GM12878 (cell line): ENCODE measurements at regions of chr20 and their contacts with region 1.

Region 1: DNA sequence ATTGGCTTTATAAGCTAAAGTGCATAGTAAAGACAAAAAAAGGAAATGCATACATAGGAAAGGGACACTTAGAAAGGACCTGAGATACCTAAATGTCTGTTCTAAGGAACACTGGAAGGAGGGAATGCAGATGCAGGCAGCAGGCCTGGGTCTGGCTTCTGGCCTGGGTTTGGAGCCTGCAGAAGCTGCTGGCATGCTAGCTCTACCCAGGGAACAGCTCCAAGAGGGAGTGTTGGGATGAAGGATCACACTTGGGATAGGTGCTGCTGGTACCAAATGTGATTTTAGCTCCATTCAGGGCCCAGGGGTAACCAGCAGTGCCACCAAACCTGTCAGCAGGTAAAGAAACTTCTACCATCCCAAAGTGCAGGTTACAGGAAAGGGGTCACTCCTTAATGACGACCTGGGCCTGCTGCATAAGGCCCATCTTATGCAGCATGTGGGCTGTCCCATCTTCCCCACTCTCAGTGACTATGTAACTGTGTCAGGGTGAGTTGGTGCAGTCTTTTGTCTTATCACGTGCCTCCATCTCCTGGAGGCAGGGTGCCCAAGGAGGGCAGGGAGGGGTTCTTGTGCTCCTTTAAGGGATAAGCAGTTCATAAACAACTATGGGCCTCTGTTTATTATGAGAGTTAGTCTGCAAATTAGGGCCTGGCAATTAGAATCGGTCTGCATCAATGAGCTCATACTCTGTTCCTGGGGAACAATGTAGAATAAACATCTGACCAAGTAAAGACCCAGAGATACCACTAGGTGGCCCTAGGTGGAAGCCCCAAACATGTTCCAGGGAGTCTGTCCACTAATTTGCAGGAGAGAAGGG is 26.9 kb downstream of the DDX27 start:
- DNase-seq: no peak
- ATAC-seq: peak; percentile 89
- H3K4me3 ChIP-seq: no peak overlapping the region
- H3K27ac ChIP-seq: no peak overlapping the region
- H3K4me1 ChIP-seq: no peaks in the 10 kb centered on the region
- H3K27me3 ChIP-seq: no peaks in the 10 kb centered on the region
- CTCF ChIP-seq: peak; percentile 65 to 76 (median 76)
- EP300 ChIP-seq: no peak
- POLR2A ChIP-seq: no peak
- RAD21 ChIP-seq: peak; percentile 70

Region 2: DNA sequence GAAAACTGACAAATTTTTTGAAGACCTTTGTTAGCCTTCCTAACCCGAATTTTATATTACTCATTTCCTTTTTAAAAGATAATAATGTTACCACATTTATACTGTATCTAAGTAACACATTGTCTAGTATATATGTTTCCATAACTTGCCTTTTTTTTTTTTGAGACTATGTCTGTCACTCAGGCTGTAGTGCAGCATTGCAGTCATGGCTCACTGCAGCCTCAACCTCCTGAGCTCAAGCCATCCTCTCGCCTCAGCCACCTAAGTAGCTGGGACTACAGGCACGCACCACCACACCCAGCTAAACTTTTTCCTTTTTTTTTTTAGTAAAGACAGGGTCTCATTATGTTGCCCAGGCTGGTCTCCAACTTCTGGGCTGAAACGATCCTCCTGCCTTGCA is 13.2 kb after region 1 on chr20:
- CTCF ChIA-PET with region 1: interaction called, 17 read pairs
- POLR2A ChIA-PET with region 1: interaction called, 4 read pairs
- RAD21 ChIA-PET with region 1: no interaction called
- SMC1A ChIA-PET with region 1: interaction called, 4 read pairs
- in situ Hi-C with region 1: no loop called
- intact Hi-C with region 1: no loop called
- DNase-seq: no peak
- ATAC-seq: no peak
- H3K4me3 ChIP-seq: no peak overlapping the region
- H3K27ac ChIP-seq: no peak overlapping the region
- H3K4me1 ChIP-seq: no peaks in the 10 kb centered on the region
- H3K27me3 ChIP-seq: no peaks in the 10 kb centered on the region
- CTCF ChIP-seq: no peak
- EP300 ChIP-seq: no peak
- POLR2A ChIP-seq: no peak
- RAD21 ChIP-seq: no peak

Region 3: GRCh38 chr20:49268600-49269365 is 22.7 kb after region 1 on chr20:
- CTCF ChIA-PET with region 1: interaction called, 12 read pairs
- POLR2A ChIA-PET with region 1: interaction called, 3 read pairs
- RAD21 ChIA-PET with region 1: interaction called, 3 read pairs
- SMC1A ChIA-PET with region 1: interaction called, 3 read pairs
- in situ Hi-C with region 1: no loop called
- intact Hi-C with region 1: no loop called
- DNase-seq: no peak
- ATAC-seq: peak; percentile 61
- H3K4me3 ChIP-seq: peak overlapping the region; percentile 54
- H3K27ac ChIP-seq: no peak overlapping the region
- H3K4me1 ChIP-seq: peaks cover 26% of the 10 kb centered on the region
- H3K27me3 ChIP-seq: no peaks in the 10 kb centered on the region
- CTCF ChIP-seq: no peak
- EP300 ChIP-seq: no peak
- POLR2A ChIP-seq: no peak
- RAD21 ChIP-seq: no peak

Region 4: GRCh38 chr20:49278036-49278817 is 32.1 kb after region 1 on chr20 and contains the start of gene ZNFX1:
- CTCF ChIA-PET with region 1: interaction called, 6 read pairs
- POLR2A ChIA-PET with region 1: interaction called, 5 read pairs
- RAD21 ChIA-PET with region 1: interaction called, 17 read pairs
- SMC1A ChIA-PET with region 1: interaction called, 17 read pairs
- in situ Hi-C with region 1: no loop called
- intact Hi-C with region 1: no loop called
- DNase-seq: peak; percentile 95
- ATAC-seq: peak; percentile 85
- H3K4me3 ChIP-seq: peak within 1 kb of the TSS; percentile 95
- H3K27ac ChIP-seq: peak within 1 kb of the TSS; percentile 92
- H3K4me1 ChIP-seq: peaks cover 3% of the 10 kb centered on the region; the same call in 1 of the 2 replicates
- H3K27me3 ChIP-seq: no peaks in the 10 kb centered on the region
- CTCF ChIP-seq: peak in 2 of 3 experiments; percentile 3 to 24; a peak in 2 of 6 replicates
- EP300 ChIP-seq: 0 out of 4 replicates have a peak, but pooled peaks of 1 of the 2 experiments have one; percentile 9
- POLR2A ChIP-seq: peak; percentile 99
- RAD21 ChIP-seq: no peak
- polyA plus RNA-seq, gene ZNFX1: 7.4 to 14.6 TPM

Region 5: GRCh38 chr20:49323622-49324238 is 77.6 kb after region 1 on chr20:
- CTCF ChIA-PET with region 1: interaction called, 46 read pairs
- POLR2A ChIA-PET with region 1: interaction called, 4 read pairs
- RAD21 ChIA-PET with region 1: interaction called, 8 read pairs
- SMC1A ChIA-PET with region 1: interaction called, 5 read pairs
- in situ Hi-C with region 1: no loop called
- intact Hi-C with region 1: loop called (anchors 2 kb)
- DNase-seq: no peak
- ATAC-seq: peak; percentile 79
- H3K4me3 ChIP-seq: no peak overlapping the region
- H3K27ac ChIP-seq: no peak overlapping the region
- H3K4me1 ChIP-seq: no peaks in the 10 kb centered on the region
- H3K27me3 ChIP-seq: peaks cover 12 to 13% of the 10 kb centered on the region in 2 experiments
- CTCF ChIP-seq: peak; percentile 38 to 60 (median 44); a peak in 4 of 6 replicates
- EP300 ChIP-seq: no peak
- POLR2A ChIP-seq: no peak
- RAD21 ChIP-seq: peak; percentile 71

Region 6: DNA sequence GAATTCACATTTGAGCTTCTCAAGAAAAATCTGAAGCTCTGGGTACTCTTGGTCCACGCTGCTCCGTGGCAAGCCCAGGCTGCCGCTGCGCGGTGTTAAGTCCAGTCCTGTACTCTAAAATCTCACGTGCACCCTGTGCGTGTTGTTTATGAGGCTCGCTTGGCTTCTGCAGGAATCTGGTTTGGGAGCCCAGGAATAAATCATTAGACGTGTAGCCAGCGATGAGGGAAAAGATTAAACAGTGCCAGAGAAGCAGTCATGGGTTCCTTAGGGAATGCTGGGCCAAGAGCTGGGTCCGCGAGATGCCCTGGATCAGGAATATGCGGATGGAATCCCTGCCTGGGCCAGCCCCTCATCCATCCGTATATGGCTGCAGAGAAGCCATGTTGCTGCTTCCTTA is 149.1 kb after region 1 on chr20:
- CTCF ChIA-PET with region 1: no interaction called
- POLR2A ChIA-PET with region 1: no interaction called
- RAD21 ChIA-PET with region 1: no interaction called
- SMC1A ChIA-PET with region 1: no interaction called
- in situ Hi-C with region 1: no loop called
- intact Hi-C with region 1: no loop called
- DNase-seq: no peak
- ATAC-seq: no peak
- H3K4me3 ChIP-seq: no peak overlapping the region
- H3K27ac ChIP-seq: no peak overlapping the region
- H3K4me1 ChIP-seq: no peaks in the 10 kb centered on the region
- H3K27me3 ChIP-seq: peaks cover 4 to 9% of the 10 kb centered on the region in 2 experiments; a peak in 3 of 4 replicates
- CTCF ChIP-seq: no peak
- EP300 ChIP-seq: no peak
- POLR2A ChIP-seq: no peak
- RAD21 ChIP-seq: no peak

Region 7: GRCh38 chr20:49928401-49929141 is 682.4 kb after region 1 on chr20:
- CTCF ChIA-PET with region 1: no interaction called
- POLR2A ChIA-PET with region 1: no interaction called
- RAD21 ChIA-PET with region 1: no interaction called
- SMC1A ChIA-PET with region 1: no interaction called
- in situ Hi-C with region 1: no loop called
- intact Hi-C with region 1: no loop called
- DNase-seq: no peak
- ATAC-seq: peak; percentile 93
- H3K4me3 ChIP-seq: no peak overlapping the region
- H3K27ac ChIP-seq: no peak overlapping the region
- H3K4me1 ChIP-seq: no peaks in the 10 kb centered on the region
- H3K27me3 ChIP-seq: no peaks in the 10 kb centered on the region
- CTCF ChIP-seq: peak; percentile 85 to 90 (median 88)
- EP300 ChIP-seq: no peak
- POLR2A ChIP-seq: no peak
- RAD21 ChIP-seq: peak; percentile 81